MCF 10A (cell line): ENCODE measurements at regions of chr9 and their contacts with region 1.

Region 1: DNA sequence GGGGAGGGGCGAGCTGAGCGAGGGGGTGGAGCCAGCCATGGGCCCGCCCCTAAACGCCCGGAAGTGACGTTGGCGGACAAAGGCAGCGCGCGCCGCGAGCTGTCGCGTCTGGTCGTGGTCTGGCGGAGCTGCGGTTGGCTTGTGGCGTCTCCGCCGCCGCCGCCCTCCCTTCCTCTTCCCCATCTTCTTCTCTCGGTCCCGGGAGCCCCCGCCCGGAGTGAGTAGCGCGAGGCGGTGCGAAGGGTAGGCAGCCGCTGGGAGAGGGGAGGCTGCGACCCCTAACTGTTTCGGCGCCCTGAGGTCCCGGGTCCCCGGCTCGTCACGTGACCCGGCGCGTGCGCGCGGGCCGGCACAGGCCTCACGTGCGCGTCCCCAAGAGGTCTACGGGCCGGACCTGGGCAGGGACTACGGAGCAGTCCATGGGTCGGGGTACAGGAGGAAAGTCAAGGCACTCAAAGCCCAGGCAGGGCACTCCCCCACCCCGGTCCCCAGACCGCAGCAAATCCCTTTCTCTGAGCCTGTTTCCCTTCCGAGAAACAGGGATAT is at the start of gene NTMT1:
- DNase-seq: peak; percentile 82
- H3K4me3 Mint-ChIP-seq: peak within 1 kb of the TSS; percentile 92
- H3K27ac Mint-ChIP-seq: peak within 1 kb of the TSS; percentile 72
- H3K4me1 Mint-ChIP-seq: peaks cover 33% of the 10 kb centered on the region
- H3K27me3 Mint-ChIP-seq: no peaks in the 10 kb centered on the region
- CTCF ChIP-seq: no peak
- total RNA-seq, gene NTMT1: 32.9 and 49.2 TPM in 2 replicates

Region 2: DNA sequence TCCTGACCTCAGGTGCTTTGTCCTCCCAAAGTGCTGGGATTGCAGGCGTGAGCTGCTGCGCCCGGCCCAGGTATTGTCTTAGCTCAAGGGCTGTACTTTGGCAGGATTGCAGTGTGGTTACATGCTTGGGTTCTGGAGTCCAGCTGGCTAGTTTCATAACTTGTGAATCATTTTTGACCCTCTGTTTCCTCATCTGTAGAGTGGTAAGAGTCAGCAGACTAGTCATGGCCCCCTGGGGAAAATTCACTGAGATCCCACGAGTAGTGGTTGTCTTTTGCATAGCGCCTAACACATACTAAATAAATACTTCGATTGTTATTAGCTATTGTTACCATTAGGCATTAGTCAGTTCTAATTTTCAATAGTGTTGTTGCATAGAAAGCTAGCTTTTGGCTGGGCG is 500.7 kb before region 1 on chr9:
- CTCF ChIA-PET with region 1: interaction called, 96 read pairs
- POLR2A ChIA-PET with region 1: interaction called, 7 read pairs
- intact Hi-C with region 1: no loop called
- DNase-seq: peak; percentile 97
- H3K4me3 Mint-ChIP-seq: no peak overlapping the region
- H3K27ac Mint-ChIP-seq: peak overlapping the region; percentile 16
- H3K4me1 Mint-ChIP-seq: peaks cover 10% of the 10 kb centered on the region
- H3K27me3 Mint-ChIP-seq: no peaks in the 10 kb centered on the region
- CTCF ChIP-seq: no peak

Region 3: GRCh38 chr9:129131300-129132145 is 494.6 kb before region 1 on chr9:
- CTCF ChIA-PET with region 1: interaction called, 96 read pairs
- POLR2A ChIA-PET with region 1: interaction called, 8 read pairs
- intact Hi-C with region 1: no loop called
- DNase-seq: peak; percentile 70
- H3K4me3 Mint-ChIP-seq: no peak overlapping the region
- H3K27ac Mint-ChIP-seq: no peak overlapping the region
- H3K4me1 Mint-ChIP-seq: no peaks in the 10 kb centered on the region
- H3K27me3 Mint-ChIP-seq: no peaks in the 10 kb centered on the region
- CTCF ChIP-seq: peak; percentile 92

Region 4: GRCh38 chr9:129495534-129496325 is 130.4 kb before region 1 on chr9:
- CTCF ChIA-PET with region 1: no interaction called
- POLR2A ChIA-PET with region 1: interaction called, 11 read pairs
- intact Hi-C with region 1: no loop called
- DNase-seq: peak; percentile 91
- H3K4me3 Mint-ChIP-seq: peak overlapping the region; percentile 76
- H3K27ac Mint-ChIP-seq: peak overlapping the region; percentile 66
- H3K4me1 Mint-ChIP-seq: peaks cover 49% of the 10 kb centered on the region
- H3K27me3 Mint-ChIP-seq: no peaks in the 10 kb centered on the region
- CTCF ChIP-seq: no peak

Region 5: GRCh38 chr9:129610473-129611301 is 15.5 kb before region 1 on chr9:
- CTCF ChIA-PET with region 1: interaction called, 30 read pairs
- POLR2A ChIA-PET with region 1: interaction called, 5 read pairs
- intact Hi-C with region 1: loop called (anchors 2 kb)
- DNase-seq: peak; percentile 66
- H3K4me3 Mint-ChIP-seq: peak overlapping the region; percentile 75
- H3K27ac Mint-ChIP-seq: no peak overlapping the region
- H3K4me1 Mint-ChIP-seq: peaks cover 13% of the 10 kb centered on the region
- H3K27me3 Mint-ChIP-seq: no peaks in the 10 kb centered on the region
- CTCF ChIP-seq: peak; percentile 88

Region 6: DNA sequence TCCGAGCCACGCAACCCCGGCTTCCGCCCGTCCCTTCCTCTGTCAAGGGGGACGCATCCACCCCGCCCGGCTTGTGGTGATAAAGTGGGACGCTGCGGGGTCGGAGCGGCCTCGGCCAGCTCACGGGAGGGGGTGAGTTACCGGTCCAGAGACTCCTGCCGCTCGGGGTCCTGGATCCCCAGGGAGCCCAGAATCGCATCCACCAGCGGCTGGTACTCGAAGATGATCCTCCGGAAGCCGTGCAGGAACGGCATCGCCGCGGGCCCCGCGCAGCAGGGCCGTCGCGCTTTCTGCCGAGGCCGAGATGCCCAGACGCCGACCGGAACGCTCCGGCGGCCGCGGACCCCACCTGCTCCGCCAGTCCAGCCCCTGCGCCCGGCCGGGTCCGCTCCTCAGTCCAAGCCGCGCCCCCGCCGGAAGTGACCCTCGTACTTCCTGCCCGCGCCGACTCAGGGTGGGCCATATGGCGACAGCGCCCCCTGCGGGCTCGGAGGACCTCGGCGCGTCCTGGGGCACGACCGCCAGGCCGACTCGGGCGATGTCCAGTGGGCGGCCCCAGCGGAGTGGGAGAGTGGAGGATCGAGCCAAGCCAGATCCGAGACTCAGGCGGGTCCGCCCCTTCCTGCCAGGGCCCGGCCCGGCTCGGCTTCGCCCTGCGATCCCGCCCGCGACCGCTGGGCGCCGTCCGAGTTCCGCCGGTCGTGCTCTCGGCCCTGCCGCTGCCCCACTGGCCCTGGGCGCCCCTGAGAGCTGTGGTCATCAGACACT is 15.8 kb after region 1 on chr9 and contains the start of gene ASB6:
- CTCF ChIA-PET with region 1: interaction called, 23 read pairs
- POLR2A ChIA-PET with region 1: interaction called, 55 read pairs
- intact Hi-C with region 1: no loop called
- DNase-seq: peak; percentile 93
- H3K4me3 Mint-ChIP-seq: peak within 1 kb of the TSS; percentile 87
- H3K27ac Mint-ChIP-seq: peak within 1 kb of the TSS; percentile 79
- H3K4me1 Mint-ChIP-seq: peaks cover 12% of the 10 kb centered on the region
- H3K27me3 Mint-ChIP-seq: no peaks in the 10 kb centered on the region
- CTCF ChIP-seq: peak; percentile 97
- total RNA-seq, gene ASB6: 14.4 TPM in 2 replicates

Region 7: GRCh38 chr9:129752915-129753729 is 127.0 kb after region 1 on chr9 and contains the start of gene PTGES:
- CTCF ChIA-PET with region 1: interaction called, 3 read pairs
- POLR2A ChIA-PET with region 1: interaction called, 10 read pairs
- intact Hi-C with region 1: no loop called
- DNase-seq: peak; percentile 90
- H3K4me3 Mint-ChIP-seq: peak within 1 kb of the TSS; percentile 93
- H3K27ac Mint-ChIP-seq: peak within 1 kb of the TSS; percentile 82
- H3K4me1 Mint-ChIP-seq: peaks cover 22% of the 10 kb centered on the region
- H3K27me3 Mint-ChIP-seq: no peaks in the 10 kb centered on the region
- CTCF ChIP-seq: no peak
- total RNA-seq, gene PTGES: 74.0 and 96.6 TPM in 2 replicates